Mammary epithelial cell (primary cell): ENCODE measurements at regions of chr1 and their contacts with region 1.

Region 1: GRCh38 chr1:79006564-79006963 is at the start of gene ADGRL4:
- DNase-seq: no peak
- H3K4me3 ChIP-seq: no peak within 1 kb of the TSS
- H3K27ac ChIP-seq: no peak within 1 kb of the TSS
- H3K4me1 ChIP-seq: no peaks in the 10 kb centered on the region
- H3K27me3 ChIP-seq: no peaks in the 10 kb centered on the region
- CTCF ChIP-seq: no peak
- total RNA-seq, gene ADGRL4: not detected

Region 2: GRCh38 chr1:79100385-79100784 is 93.8 kb after region 1 on chr1:
- CTCF ChIA-PET with region 1: no interaction called
- dilution Hi-C with region 1: loop called (anchors 25 kb)
- in situ Hi-C with region 1: no loop called
- intact Hi-C with region 1: no loop called
- DNase-seq: peak; percentile 95
- H3K4me3 ChIP-seq: no peak overlapping the region
- H3K27ac ChIP-seq: no peak overlapping the region
- H3K4me1 ChIP-seq: peaks cover 7% of the 10 kb centered on the region
- H3K27me3 ChIP-seq: no peaks in the 10 kb centered on the region
- CTCF ChIP-seq: no peak

Region 3: GRCh38 chr1:79259388-79260336 is 253.1 kb after region 1 on chr1:
- CTCF ChIA-PET with region 1: no interaction called
- dilution Hi-C with region 1: no loop called
- in situ Hi-C with region 1: no loop called
- intact Hi-C with region 1: no loop called
- DNase-seq: peak; percentile 12
- H3K4me3 ChIP-seq: no peak overlapping the region
- H3K27ac ChIP-seq: no peak overlapping the region
- H3K4me1 ChIP-seq: no peaks in the 10 kb centered on the region
- H3K27me3 ChIP-seq: peaks cover 2% of the 10 kb centered on the region
- CTCF ChIP-seq: peak; percentile 51 to 71